Posterior vena cava (tissue), 2 donors: ENCODE measurements at regions of chr2 and their contacts with region 1.

Region 1: GRCh38 chr2:142997231-142997630 is 119.8 kb downstream of the KYNU start:
- DNase-seq: no peak

Region 2: DNA sequence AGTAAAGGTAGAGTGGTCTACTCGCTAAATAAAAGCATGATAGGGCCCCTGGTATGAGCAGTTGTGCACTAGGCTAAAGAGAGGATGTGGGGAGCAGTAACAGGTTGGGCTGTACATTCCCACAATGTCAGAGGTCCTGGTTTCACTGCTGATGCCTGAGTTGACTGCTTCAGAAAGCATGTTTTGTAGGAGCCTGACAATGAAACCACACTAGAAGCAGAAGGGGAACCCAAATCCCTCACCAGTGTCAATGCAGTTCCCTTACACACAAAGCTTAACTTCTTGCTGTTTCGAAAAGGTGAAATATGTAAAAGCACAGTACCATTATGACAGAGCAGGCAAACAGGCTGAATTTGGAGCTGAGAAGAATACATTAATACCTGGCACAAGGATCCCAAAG is 411.4 kb before region 1 on chr2:
- intact Hi-C with region 1: no loop called
- DNase-seq: no peak

Region 3: GRCh38 chr2:143051465-143051864 is 54.2 kb after region 1 on chr2:
- intact Hi-C with region 1: loop called in 1 of 2 experiments (anchors 2 kb)
- DNase-seq: no peak